Gastrocnemius medialis (tissue), 4 donors: ENCODE measurements at regions of chr10 and their contacts with region 1.

Region 1: GRCh38 chr10:50529660-50530059 is 94.1 kb downstream of the SGMS1 start:
- DNase-seq: no peak
- ATAC-seq: no peak
- H3K4me3 ChIP-seq: no peak overlapping the region
- H3K27ac ChIP-seq: no peak overlapping the region
- H3K4me1 ChIP-seq: peaks cover 0 to 7% of the 10 kb centered on the region in 2 donors
- H3K27me3 ChIP-seq: no peaks in the 10 kb centered on the region
- CTCF ChIP-seq: no peak
- POLR2A ChIP-seq: no peak

Region 2: GRCh38 chr10:50477287-50478203 is 52.1 kb before region 1 on chr10:
- in situ Hi-C with region 1: no loop called
- intact Hi-C with region 1: loop called (anchors 5 kb)
- DNase-seq: no peak
- ATAC-seq: no peak
- H3K4me3 ChIP-seq: no peak overlapping the region
- H3K27ac ChIP-seq: no peak overlapping the region
- H3K4me1 ChIP-seq: peaks cover 13 to 24% of the 10 kb centered on the region in 2 donors
- H3K27me3 ChIP-seq: no peaks in the 10 kb centered on the region
- CTCF ChIP-seq: no peak
- POLR2A ChIP-seq: no peak